Activated B cell treated with CpG ODN at 0.5 μM for 24 hours (primary cell): ENCODE measurements at regions of chr3 and their contacts with region 1.

Region 1: GRCh38 chr3:67113802-67114407 is 115.8 kb downstream of the KBTBD8 start:
- DNase-seq: peak; percentile 66
- ATAC-seq: peak; percentile 99
- H3K4me3 Mint-ChIP-seq: no peak overlapping the region
- H3K27ac Mint-ChIP-seq: no peak overlapping the region
- H3K4me1 Mint-ChIP-seq: no peaks in the 10 kb centered on the region
- H3K27me3 Mint-ChIP-seq: peaks cover 12% of the 10 kb centered on the region
- CTCF ChIP-seq: peak; percentile 48

Region 2: DNA sequence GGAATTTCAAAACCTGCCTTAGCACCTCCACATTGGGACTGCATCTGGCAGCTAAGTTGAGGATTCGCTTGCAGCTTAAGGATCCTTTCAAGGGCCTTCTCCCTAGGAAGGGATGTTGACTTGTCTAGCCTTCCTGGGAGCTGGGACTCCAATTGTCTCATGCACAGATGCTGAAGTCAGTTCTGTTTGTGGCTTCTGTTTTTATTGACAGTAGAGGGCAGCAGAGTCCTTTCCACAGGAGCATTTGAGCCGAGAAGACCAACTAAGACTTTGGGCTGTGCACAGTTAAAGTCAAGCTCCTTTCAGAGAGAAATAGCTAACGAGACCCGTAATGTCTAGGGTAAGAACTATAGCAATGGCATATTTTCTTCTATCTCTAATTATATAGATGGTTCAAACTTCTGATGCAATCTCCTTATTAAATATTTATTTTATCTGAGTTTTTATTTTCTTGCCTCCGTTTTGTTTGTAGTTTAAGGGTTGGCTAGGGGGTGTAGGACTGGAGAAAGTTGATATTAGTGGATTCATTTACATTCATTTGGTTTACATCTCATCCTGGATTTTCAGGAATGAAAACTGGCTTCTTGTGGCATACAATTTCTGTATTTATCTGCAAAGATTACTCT is 175.5 kb before region 1 on chr3:
- CTCF ChIA-PET with region 1: interaction called, 8 read pairs
- POLR2A ChIA-PET with region 1: no interaction called
- intact Hi-C with region 1: loop called (anchors 1 kb)
- DNase-seq: no peak
- ATAC-seq: peak; percentile 56
- H3K4me3 Mint-ChIP-seq: no peak overlapping the region
- H3K27ac Mint-ChIP-seq: no peak overlapping the region
- H3K4me1 Mint-ChIP-seq: no peaks in the 10 kb centered on the region
- H3K27me3 Mint-ChIP-seq: peaks cover 5% of the 10 kb centered on the region
- CTCF ChIP-seq: peak; percentile 47

Region 3: DNA sequence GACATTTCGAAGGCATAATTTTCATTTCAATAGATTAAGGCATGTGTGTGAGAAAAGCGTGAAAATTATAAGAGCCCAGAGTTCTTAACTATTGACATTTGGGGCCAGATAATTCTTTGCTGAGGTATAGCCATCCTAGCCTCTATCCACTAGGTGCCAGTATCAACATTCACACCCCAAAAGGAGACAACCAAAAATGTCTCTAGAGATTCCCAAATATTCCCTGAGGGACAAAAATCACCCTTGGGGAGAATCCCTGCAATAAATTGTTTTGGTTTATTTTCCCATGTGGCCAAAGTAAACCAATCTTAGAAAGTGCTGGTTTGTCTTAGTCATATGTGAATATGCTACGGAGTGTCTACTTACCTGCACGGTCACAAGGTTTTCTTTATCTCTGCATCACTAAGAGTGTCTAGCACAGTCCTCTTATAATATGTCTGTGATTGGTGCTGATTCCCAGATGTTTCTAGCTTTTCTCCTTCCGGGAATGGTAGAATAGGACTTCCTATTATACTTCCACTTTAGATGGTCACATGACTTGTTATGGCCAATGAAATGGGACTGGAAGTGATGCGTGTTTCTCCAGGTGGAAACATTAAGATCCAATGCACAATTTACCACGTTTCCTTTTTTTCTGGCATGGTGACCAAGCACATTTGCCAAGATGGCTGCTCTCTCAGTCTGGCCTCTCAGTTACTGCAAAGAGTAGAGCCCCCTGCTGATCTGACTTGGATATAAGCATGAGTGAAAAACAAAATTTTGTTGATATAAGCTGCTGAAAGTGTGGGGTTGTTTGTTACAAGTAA is 123.8 kb before region 1 on chr3:
- CTCF ChIA-PET with region 1: interaction called, 30 read pairs
- POLR2A ChIA-PET with region 1: no interaction called
- intact Hi-C with region 1: loop called (anchors 1 kb)
- DNase-seq: no peak
- ATAC-seq: peak; percentile 83
- H3K4me3 Mint-ChIP-seq: peak overlapping the region; percentile 83
- H3K27ac Mint-ChIP-seq: peak overlapping the region; percentile 87
- H3K4me1 Mint-ChIP-seq: peaks cover 5% of the 10 kb centered on the region
- H3K27me3 Mint-ChIP-seq: peaks cover 3% of the 10 kb centered on the region
- CTCF ChIP-seq: no peak

Region 4: DNA sequence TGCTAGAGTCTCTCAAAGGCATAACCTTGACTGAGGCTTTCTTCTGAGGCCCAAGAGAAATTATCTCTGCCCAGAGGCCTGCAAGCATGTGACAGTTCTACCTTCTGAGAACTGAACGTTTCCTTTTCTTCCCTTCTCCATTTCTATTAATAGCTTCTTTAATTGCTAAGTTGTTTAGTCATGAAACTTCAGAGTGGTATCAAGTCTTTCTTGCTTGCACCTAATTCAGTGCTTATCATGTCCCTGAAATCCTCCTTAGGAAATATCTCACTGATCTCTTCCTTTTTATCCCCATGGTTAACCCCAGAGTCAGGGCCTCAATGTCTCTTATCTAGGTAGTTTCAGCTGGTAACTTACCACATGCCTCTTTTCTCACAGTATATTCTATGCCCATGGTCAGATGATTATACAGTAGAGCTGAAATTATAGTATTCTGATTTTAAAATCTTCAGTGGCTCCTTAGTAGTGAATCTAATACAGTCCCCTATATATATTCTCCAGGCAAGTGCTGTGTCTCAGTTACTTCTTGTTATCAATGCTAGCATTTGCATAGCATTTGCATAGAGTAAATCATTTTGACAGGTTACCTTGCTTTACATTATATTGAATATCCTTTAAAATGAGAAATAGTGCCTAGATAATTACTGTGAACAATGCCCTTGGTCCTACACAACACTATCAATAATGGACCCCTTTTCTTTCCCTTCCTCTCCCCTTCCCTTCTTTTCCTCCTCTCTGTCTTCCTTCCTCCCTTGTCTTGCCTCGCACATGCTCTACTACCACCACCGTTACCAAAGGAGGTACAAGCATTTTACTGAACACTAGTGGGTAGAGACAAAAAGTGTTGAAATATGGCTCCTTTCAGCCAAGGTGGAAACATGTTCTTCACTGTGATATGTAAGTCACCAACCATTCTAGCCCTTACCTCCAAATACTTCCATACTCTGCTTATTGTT is 82.8 kb before region 1 on chr3:
- CTCF ChIA-PET with region 1: interaction called, 11 read pairs
- POLR2A ChIA-PET with region 1: no interaction called
- intact Hi-C with region 1: no loop called
- DNase-seq: no peak
- ATAC-seq: no peak
- H3K4me3 Mint-ChIP-seq: no peak overlapping the region
- H3K27ac Mint-ChIP-seq: no peak overlapping the region
- H3K4me1 Mint-ChIP-seq: peaks cover 23% of the 10 kb centered on the region
- H3K27me3 Mint-ChIP-seq: no peaks in the 10 kb centered on the region
- CTCF ChIP-seq: no peak

Region 5: GRCh38 chr3:67346081-67346480 is 232.2 kb after region 1 on chr3:
- CTCF ChIA-PET with region 1: no interaction called
- POLR2A ChIA-PET with region 1: no interaction called
- intact Hi-C with region 1: no loop called
- DNase-seq: no peak
- ATAC-seq: no peak
- H3K4me3 Mint-ChIP-seq: no peak overlapping the region
- H3K27ac Mint-ChIP-seq: no peak overlapping the region
- H3K4me1 Mint-ChIP-seq: peaks cover 3% of the 10 kb centered on the region
- H3K27me3 Mint-ChIP-seq: no peaks in the 10 kb centered on the region
- CTCF ChIP-seq: no peak

Region 6: GRCh38 chr3:67357610-67358458 is 243.9 kb after region 1 on chr3:
- CTCF ChIA-PET with region 1: interaction called, 17 read pairs
- POLR2A ChIA-PET with region 1: no interaction called
- intact Hi-C with region 1: loop called (anchors 1 kb)
- DNase-seq: no peak
- ATAC-seq: no peak
- H3K4me3 Mint-ChIP-seq: no peak overlapping the region
- H3K27ac Mint-ChIP-seq: no peak overlapping the region
- H3K4me1 Mint-ChIP-seq: no peaks in the 10 kb centered on the region
- H3K27me3 Mint-ChIP-seq: no peaks in the 10 kb centered on the region
- CTCF ChIP-seq: no peak

Region 7: DNA sequence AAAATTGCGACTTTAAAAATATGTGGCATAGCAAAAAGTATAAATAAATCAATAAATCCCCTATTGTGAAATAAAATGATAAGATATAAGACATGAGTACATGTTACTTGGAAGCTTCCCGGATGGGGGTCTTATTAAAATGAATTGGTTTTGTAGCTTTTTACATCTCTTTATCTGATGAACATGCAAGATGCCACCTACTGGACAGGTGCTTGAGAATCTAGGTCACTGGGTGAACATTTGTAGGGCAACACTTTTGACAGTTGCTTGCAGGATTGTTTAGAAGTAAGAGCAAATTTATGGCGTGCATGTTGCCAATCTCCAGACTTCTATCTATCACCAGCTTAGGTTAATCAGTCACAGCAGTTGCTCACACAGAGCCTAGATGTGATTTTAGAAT is 903.2 kb after region 1 on chr3:
- CTCF ChIA-PET with region 1: interaction called, 6 read pairs
- POLR2A ChIA-PET with region 1: no interaction called
- intact Hi-C with region 1: loop called (anchors 5 kb)
- DNase-seq: no peak
- ATAC-seq: no peak
- H3K4me3 Mint-ChIP-seq: no peak overlapping the region
- H3K27ac Mint-ChIP-seq: no peak overlapping the region
- H3K4me1 Mint-ChIP-seq: no peaks in the 10 kb centered on the region
- H3K27me3 Mint-ChIP-seq: no peaks in the 10 kb centered on the region
- CTCF ChIP-seq: no peak

Region 8: GRCh38 chr3:68893600-68894239 is 1779.8 kb after region 1 on chr3:
- CTCF ChIA-PET with region 1: interaction called, 12 read pairs
- POLR2A ChIA-PET with region 1: no interaction called
- intact Hi-C with region 1: loop called (anchors 1 kb)
- DNase-seq: no peak
- ATAC-seq: no peak
- H3K4me3 Mint-ChIP-seq: no peak overlapping the region
- H3K27ac Mint-ChIP-seq: no peak overlapping the region
- H3K4me1 Mint-ChIP-seq: no peaks in the 10 kb centered on the region
- H3K27me3 Mint-ChIP-seq: peaks cover 5% of the 10 kb centered on the region
- CTCF ChIP-seq: no peak